OCI-LY7 (cell line): ENCODE measurements at regions of chr10 and their contacts with region 1.

Region 1: DNA sequence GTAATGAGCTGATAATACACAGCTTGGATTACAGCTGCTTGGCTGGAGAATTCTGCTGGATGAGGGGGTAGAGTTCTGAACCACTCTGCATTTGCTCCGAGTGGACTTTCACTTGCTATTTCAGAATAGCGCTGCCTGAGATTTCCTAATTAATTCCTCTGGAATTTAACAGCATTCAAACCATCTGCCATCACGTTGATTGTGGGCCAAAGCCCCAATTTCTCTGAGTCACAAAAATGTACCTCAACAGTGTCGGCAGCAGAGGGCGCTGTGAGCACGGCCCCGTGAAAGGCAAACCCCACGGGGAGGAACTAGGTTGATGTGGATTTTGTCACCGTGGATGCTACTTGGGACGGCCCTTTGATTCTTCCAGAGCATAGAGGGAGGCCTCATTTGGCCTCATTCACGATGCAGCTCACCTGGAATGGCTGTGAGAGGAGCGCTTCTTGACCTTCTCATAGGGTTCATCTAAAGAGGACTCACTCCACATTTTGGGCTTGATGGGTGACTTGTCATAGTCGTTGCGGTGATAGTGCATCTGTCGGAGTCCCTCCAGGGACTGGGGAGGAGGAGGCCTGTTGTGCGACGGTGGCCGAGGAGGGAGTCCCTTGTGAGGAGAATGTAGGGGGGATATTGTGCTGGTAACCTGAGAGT is 73.3 kb downstream of the PRPF18 start:
- DNase-seq: peak; percentile 43
- H3K4me3 ChIP-seq: no peak overlapping the region
- H3K27ac ChIP-seq: no peak overlapping the region
- H3K4me1 ChIP-seq: no peaks in the 10 kb centered on the region
- CTCF ChIP-seq: peak; percentile 95

Region 2: GRCh38 chr10:13165177-13165576 is 494.8 kb before region 1 on chr10:
- CTCF ChIA-PET with region 1: no interaction called
- POLR2A ChIA-PET with region 1: no interaction called
- intact Hi-C with region 1: no loop called
- DNase-seq: no peak
- H3K4me3 ChIP-seq: no peak overlapping the region
- H3K27ac ChIP-seq: no peak overlapping the region
- H3K4me1 ChIP-seq: peaks cover 30% of the 10 kb centered on the region
- CTCF ChIP-seq: no peak

Region 3: DNA sequence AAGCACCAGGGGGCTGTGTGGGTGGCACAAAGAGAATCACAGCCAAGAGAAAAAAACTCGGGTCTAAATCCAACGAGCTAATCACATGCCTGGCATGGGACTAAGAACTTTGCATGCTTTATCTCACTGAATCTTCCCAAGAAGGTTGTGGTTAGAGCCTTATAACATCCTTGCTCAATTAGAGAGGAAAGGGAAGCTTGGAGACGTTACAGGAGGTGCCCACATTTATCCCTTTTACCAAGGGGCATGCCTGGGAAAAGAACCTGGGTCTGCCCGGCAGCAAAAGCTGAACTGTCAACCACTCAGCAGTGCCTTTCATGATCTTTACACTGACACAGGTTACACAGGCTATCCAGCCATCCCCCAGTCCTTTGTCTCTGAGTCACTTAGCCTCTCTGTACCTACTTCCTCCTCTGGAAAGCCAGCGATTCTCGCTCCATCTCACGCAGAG is 116.9 kb after region 1 on chr10:
- CTCF ChIA-PET with region 1: no interaction called
- POLR2A ChIA-PET with region 1: no interaction called
- intact Hi-C with region 1: loop called (anchors 1 kb)
- DNase-seq: no peak
- H3K4me3 ChIP-seq: no peak overlapping the region
- H3K27ac ChIP-seq: no peak overlapping the region
- H3K4me1 ChIP-seq: peaks cover 8% of the 10 kb centered on the region
- CTCF ChIP-seq: no peak